ENCODE measurements at regions of chr13 and their contacts with region 1.

Region 1: GRCh38 chr13:109145631-109146030 is 516.2 kb downstream of the MYO16 start:
- DNase-seq: no peak

Region 2: DNA sequence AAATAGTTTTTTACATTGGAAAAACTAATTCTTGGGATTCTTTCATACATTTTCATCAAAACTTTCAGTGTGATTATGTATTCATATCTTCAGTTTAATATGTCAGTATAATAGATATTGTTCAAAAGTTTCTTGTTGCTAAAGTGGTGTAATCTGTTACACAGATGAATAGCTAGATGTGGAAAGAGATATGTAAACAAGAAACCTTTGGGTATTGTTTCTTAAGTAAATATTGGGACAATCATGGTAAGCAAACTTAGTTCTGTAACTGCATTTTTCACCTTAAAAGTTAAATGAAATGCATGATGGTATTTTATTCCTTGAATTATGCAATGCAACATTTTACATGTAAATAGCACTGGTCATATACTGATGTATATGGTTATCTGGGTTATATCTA is 915.3 kb before region 1 on chr13:
- intact Hi-C with region 1: no loop called
- DNase-seq: no peak

Region 3: DNA sequence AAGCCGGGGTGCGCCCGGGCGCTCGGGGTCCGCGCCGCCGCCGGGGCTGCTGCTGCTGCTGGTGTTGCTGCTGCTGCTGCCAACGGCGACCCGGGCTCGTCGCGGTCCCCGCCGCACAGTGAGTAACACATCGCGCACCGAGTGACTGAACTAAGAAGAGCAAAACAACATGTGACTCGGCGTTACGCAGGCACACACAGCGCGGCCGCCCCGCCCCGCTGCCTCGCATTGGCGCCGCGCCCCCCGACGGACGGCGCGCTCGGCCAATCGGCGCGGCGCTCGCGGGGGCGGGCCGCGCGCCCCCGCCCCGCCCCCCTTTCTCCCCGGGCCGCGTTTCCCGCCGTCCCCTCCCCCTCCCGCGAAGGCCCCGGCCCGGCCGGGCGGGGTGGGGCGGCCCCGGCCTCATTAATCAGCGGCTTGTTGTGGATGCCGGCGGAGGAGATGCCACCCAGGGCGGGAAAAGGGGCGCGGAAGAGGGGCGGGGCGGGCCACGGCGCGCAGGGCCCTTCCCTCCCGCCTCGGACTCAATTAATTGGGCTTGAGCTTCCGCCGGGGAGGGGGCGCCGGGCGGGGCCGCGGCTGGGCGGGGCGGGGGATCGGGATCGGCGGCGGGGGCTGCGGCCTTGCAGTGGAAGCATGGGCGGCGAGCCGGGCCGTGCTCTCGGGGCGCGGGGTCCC is 641.0 kb after region 1 on chr13 and contains the start of gene IRS2:
- intact Hi-C with region 1: loop called in 1 of 2 experiments (anchors 5 kb)
- DNase-seq: peak; percentile 97
- total RNA-seq, gene IRS2: 15.9 to 25.1 TPM

Region 4: DNA sequence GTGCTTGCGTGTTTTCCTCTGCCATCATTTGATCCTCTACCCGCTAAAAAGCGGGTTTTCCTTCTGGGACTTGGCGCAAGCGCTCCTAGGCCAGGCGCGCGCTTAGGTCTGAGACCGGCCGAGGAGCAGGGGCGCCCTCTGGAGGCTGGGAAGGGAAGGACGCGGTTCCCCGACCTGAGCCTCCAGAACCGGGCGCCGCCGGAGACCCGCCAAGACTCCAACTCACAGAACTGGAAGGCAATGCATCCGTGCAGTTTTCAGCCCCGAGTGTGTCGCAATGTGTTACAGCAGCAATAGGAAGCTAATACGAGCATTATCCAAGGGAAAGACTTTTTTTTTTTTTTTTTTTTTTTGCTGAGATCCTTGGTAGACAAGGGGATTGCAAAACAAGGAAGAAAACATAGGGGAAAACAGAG is 970.4 kb after region 1 on chr13:
- intact Hi-C with region 1: loop called in 1 of 2 experiments (anchors 10 kb)
- DNase-seq: peak; percentile 89

Measured in posterior vena cava (tissue), 2 donors.